K562 (cell line): ENCODE measurements at regions of chr6 and their contacts with region 1.

Region 1: GRCh38 chr6:111210194-111210728 is 123.0 kb downstream of the SLC16A10 start:
- DNase-seq: peak; percentile 21 to 62 (median 36)
- ATAC-seq: peak; percentile 83
- H3K4me3 ChIP-seq: no peak overlapping the region
- H3K27ac ChIP-seq: no peak overlapping the region
- H3K4me1 ChIP-seq: peaks cover 0 to 7% of the 10 kb centered on the region in 2 experiments; a peak in 2 of 5 replicates
- H3K27me3 ChIP-seq: peaks cover 4 to 5% of the 10 kb centered on the region in 2 experiments; a peak in 3 of 5 replicates
- CTCF ChIP-seq: peak; percentile 49 to 81 (median 72); a peak in 5 of 6 replicates
- EP300 ChIP-seq: no peak
- POLR2A ChIP-seq: no peak
- RAD21 ChIP-seq: peak; percentile 71 to 86

Region 2: DNA sequence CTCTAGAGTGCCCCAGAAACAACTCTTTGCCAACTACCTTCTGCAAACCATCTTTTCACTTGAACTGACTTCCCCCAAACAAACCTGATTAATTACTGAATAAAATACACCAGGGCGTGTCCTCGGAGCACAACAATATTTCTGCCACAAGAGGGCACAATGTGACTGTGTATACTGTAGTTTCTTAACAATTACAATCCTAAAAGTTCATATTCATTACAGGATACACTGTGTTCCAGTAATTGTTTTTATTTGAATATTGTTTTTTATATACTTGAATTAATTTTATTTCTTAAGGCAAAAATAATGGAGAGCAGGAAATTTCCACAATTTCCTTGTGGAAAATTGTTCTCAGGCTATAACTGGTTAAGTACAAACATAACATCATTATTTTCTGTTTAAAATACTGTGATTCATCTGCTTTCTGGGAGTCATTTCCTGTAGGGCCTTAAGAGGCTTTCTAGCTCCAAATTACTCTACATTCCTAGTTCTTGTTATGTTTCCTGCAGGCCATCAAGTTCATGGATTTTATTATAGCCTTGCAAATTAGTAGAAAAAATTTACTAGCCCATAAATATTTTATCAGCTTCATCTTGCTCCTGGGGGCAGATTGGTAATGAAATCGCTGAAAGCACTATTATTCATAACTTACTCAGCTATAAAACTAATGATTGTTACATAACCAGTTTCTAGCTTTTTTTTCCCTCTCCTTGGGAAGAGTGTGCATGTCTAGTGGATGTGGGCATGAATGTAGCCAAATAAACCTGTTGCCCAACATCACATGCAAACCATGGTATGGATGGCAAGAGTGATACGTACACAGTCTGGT is 681.9 kb before region 1 on chr6:
- CTCF ChIA-PET with region 1: interaction called, 4 read pairs
- POLR2A ChIA-PET with region 1: no interaction called
- in situ Hi-C with region 1: no loop called
- intact Hi-C with region 1: loop called (anchors 2 kb)
- DNase-seq: peak; percentile 51 to 70 (median 56)
- ATAC-seq: peak; percentile 91
- H3K4me3 ChIP-seq: no peak overlapping the region
- H3K27ac ChIP-seq: no peak overlapping the region
- H3K4me1 ChIP-seq: no peaks in the 10 kb centered on the region; a peak in 1 of 5 replicates
- H3K27me3 ChIP-seq: peaks cover 5 to 13% of the 10 kb centered on the region in 2 experiments; a peak in 3 of 5 replicates
- CTCF ChIP-seq: peak; percentile 44 to 87 (median 73); a peak in 5 of 6 replicates
- EP300 ChIP-seq: no peak
- POLR2A ChIP-seq: no peak
- RAD21 ChIP-seq: peak; percentile 90 to 92

Region 3: DNA sequence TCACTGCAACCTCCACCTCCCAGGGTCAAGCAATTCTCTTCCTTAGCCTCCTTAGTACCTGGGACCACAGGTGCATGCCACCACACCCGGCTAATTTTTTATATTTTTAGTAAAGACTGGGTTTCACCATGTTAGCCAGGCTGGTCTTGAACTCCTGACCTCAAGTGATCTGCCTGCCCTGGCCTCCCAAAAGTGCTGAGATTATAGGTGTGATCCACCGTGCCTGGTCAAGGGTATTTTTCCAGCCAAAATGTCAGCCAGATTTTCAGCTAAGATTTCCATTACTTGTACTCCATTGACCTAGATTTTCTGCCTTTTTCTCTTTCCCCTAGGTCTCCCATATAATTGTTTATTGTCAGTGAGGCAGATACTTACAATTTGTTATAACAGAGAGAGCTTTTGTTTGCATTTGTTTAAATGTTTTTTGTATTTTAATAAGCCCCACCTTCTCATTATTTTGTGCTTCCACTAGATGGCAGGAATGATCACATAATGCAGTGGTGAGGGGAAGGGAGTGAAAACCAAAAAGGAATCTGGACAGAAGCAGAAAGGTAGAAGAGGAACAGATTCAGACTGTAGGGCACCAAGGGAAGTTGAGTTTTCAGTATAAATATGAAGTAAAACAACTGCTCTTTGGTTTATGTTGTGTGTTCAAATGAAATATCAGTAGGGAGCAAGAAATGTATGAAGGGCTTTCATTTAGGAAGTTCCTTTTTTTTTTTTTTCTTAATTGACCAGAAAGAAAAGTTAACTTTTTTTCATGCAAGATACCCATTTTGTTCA is 198.7 kb before region 1 on chr6:
- CTCF ChIA-PET with region 1: interaction called, 4 read pairs
- POLR2A ChIA-PET with region 1: no interaction called
- in situ Hi-C with region 1: no loop called
- intact Hi-C with region 1: loop called (anchors 2 kb)
- DNase-seq: peak in 3 of 4 experiments; percentile 27 to 40 (median 33)
- ATAC-seq: peak; percentile 86
- H3K4me3 ChIP-seq: no peak overlapping the region
- H3K27ac ChIP-seq: no peak overlapping the region
- H3K4me1 ChIP-seq: no peaks in the 10 kb centered on the region
- H3K27me3 ChIP-seq: no peaks in the 10 kb centered on the region
- CTCF ChIP-seq: peak; percentile 36 to 74 (median 52); a peak in 5 of 6 replicates
- EP300 ChIP-seq: no peak
- POLR2A ChIP-seq: no peak
- RAD21 ChIP-seq: peak; percentile 68 to 73

Region 4: GRCh38 chr6:111030008-111031007 is 180.0 kb before region 1 on chr6:
- CTCF ChIA-PET with region 1: no interaction called
- POLR2A ChIA-PET with region 1: interaction called, 3 read pairs
- in situ Hi-C with region 1: no loop called
- intact Hi-C with region 1: loop called (anchors 5 kb)
- DNase-seq: no peak
- ATAC-seq: no peak; the same call in 1 of the 3 replicates
- H3K4me3 ChIP-seq: no peak overlapping the region
- H3K27ac ChIP-seq: no peak overlapping the region
- H3K4me1 ChIP-seq: no peaks in the 10 kb centered on the region
- H3K27me3 ChIP-seq: no peaks in the 10 kb centered on the region; a peak in 1 of 5 replicates
- CTCF ChIP-seq: no peak
- EP300 ChIP-seq: no peak
- POLR2A ChIP-seq: no peak
- RAD21 ChIP-seq: no peak

Region 5: GRCh38 chr6:111057074-111057752 is 153.0 kb before region 1 on chr6:
- CTCF ChIA-PET with region 1: interaction called, 4 read pairs
- POLR2A ChIA-PET with region 1: no interaction called
- in situ Hi-C with region 1: loop called (anchors 5 kb)
- intact Hi-C with region 1: loop called (anchors 2 kb)
- DNase-seq: peak; percentile 46 to 61 (median 54)
- ATAC-seq: peak; percentile 92
- H3K4me3 ChIP-seq: no peak overlapping the region
- H3K27ac ChIP-seq: no peak overlapping the region
- H3K4me1 ChIP-seq: no peaks in the 10 kb centered on the region
- H3K27me3 ChIP-seq: no peaks in the 10 kb centered on the region
- CTCF ChIP-seq: peak; percentile 62 to 76 (median 75); a peak in 5 of 6 replicates
- EP300 ChIP-seq: no peak
- POLR2A ChIP-seq: no peak
- RAD21 ChIP-seq: peak; percentile 60 to 76

Region 6: GRCh38 chr6:111250791-111251354 is 40.6 kb after region 1 on chr6:
- CTCF ChIA-PET with region 1: no interaction called
- POLR2A ChIA-PET with region 1: interaction called, 3 read pairs
- in situ Hi-C with region 1: no loop called
- intact Hi-C with region 1: loop called (anchors 5 kb)
- DNase-seq: peak; percentile 29 to 59 (median 32)
- ATAC-seq: peak; percentile 67
- H3K4me3 ChIP-seq: no peak overlapping the region
- H3K27ac ChIP-seq: peak overlapping the region; percentile 29; the same call in 1 of the 3 replicates
- H3K4me1 ChIP-seq: peaks cover 10 to 19% of the 10 kb centered on the region in 2 experiments
- H3K27me3 ChIP-seq: no peaks in the 10 kb centered on the region
- CTCF ChIP-seq: no peak
- EP300 ChIP-seq: no peak
- POLR2A ChIP-seq: no peak
- RAD21 ChIP-seq: no peak

Region 7: GRCh38 chr6:111888928-111889695 is 678.9 kb after region 1 on chr6:
- CTCF ChIA-PET with region 1: no interaction called
- POLR2A ChIA-PET with region 1: no interaction called
- in situ Hi-C with region 1: no loop called
- intact Hi-C with region 1: no loop called
- DNase-seq: peak in 1 of 4 experiments; percentile 38
- ATAC-seq: peak; percentile 49; the same call in 2 of the 3 replicates
- H3K4me3 ChIP-seq: no peak overlapping the region
- H3K27ac ChIP-seq: no peak overlapping the region
- H3K4me1 ChIP-seq: no peaks in the 10 kb centered on the region
- H3K27me3 ChIP-seq: no peaks in the 10 kb centered on the region; a peak in 2 of 5 replicates
- CTCF ChIP-seq: no peak
- EP300 ChIP-seq: no peak
- POLR2A ChIP-seq: no peak
- RAD21 ChIP-seq: no peak